BJ (cell line): ENCODE measurements at regions of chr3 and their contacts with region 1.

Region 1: DNA sequence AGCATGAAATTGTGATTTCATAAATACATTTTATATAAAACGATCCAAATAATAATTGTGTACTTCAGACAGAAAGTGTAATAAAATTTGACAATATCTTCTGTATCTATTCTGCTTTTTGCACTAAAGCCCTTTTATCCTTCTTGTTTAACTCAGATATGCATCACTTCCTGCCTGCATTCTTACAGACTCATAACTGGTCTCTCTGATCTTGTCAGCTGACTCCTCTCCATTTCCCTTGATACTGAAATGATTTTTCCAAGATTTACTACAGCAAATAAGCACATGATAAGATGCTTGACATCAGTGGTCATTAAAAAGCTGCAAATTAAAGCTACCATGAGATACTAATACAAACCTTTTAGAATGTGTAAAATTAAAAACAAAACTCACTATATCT is 25.3 kb upstream of the SI start:
- DNase-seq: no peak
- H3K4me3 ChIP-seq: no peak overlapping the region
- H3K27me3 ChIP-seq: no peaks in the 10 kb centered on the region
- CTCF ChIP-seq: no peak

Region 2: GRCh38 chr3:165196577-165197480 is 93.2 kb after region 1 on chr3:
- CTCF ChIA-PET with region 1: no interaction called
- POLR2A ChIA-PET with region 1: interaction called, 19 read pairs
- DNase-seq: no peak
- H3K4me3 ChIP-seq: no peak overlapping the region
- H3K27me3 ChIP-seq: peaks cover 18% of the 10 kb centered on the region
- CTCF ChIP-seq: no peak